Ovary (tissue), 10 donors: ENCODE measurements at regions of chr16 and their contacts with region 1.

Region 1: DNA sequence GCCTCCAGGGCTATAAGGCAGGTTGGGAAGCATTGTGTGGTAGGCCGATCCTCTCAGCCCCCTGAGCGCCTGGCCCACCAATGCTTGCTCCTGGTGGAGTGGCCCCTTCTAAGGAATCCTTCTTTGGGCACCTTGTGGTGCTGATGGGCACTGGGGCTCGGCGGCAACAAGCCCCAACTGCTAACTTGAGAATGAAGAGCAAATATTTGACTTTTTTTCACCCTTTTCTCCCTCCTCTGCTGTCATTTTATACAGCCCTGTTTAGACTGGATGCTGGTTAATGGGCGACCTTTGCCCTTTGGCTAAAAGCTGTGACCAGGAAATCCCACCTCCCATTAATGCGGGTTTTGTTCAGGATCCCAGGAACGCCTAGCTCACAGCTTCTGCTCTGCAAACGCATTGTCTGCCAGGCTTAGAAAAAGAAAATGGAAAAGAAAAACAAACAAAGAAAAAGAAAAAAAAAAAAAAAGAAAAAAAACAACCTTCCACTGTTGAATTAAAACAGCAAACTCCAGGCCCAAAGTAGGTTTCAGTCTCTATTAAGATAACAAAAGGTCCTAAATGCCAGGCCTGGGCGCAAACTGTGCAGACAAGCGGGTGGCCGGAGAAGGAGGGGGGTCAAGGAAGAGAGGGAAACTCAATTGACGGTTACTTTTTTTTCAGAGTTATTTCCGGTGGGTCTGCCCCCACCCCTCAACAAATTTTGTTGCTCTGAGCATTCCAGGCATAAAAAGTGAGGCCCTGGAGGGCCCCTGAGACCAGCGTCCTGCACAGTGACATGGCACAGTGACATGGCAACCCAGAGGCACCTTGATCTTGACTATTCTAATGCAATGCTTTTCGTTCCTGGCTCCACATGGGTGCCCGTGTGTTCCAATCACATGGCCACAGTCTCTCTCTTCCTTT is 301.4 kb downstream of the MAF start:
- DNase-seq: no peak
- H3K4me3 ChIP-seq: no peak overlapping the region
- H3K27ac ChIP-seq: no peak overlapping the region
- H3K4me1 ChIP-seq: peaks cover 5% of the 10 kb centered on the region
- H3K27me3 ChIP-seq: no peaks in the 10 kb centered on the region
- CTCF ChIP-seq: no peak
- EP300 ChIP-seq: no peak
- POLR2A ChIP-seq: no peak

Region 2: DNA sequence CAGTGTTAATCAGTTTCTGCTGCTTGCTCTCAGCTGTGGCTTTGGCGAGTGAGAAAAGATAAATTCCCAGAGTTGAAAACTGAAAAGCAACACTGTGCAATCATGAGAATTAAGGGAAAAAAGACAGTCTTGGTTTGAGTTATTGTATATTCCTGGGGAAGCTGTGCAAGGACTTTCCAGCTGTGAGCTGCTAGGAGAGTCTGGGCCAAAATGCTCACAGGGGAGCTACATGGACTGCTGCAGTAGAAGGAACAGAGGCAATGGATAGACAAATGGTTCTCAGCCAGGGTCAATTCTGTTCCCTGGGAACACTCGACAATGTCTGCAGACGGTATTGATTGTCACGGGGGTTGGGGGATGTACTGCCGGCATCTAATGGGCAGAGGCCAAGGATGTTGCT is 1762.3 kb before region 1 on chr16:
- intact Hi-C with region 1: loop called in 1 of 4 experiments (anchors 5 kb)
- DNase-seq: no peak
- H3K4me3 ChIP-seq: no peak overlapping the region
- H3K27ac ChIP-seq: no peak overlapping the region
- H3K4me1 ChIP-seq: peaks cover 2% of the 10 kb centered on the region
- H3K27me3 ChIP-seq: no peaks in the 10 kb centered on the region
- CTCF ChIP-seq: no peak
- EP300 ChIP-seq: no peak
- POLR2A ChIP-seq: no peak

Region 3: DNA sequence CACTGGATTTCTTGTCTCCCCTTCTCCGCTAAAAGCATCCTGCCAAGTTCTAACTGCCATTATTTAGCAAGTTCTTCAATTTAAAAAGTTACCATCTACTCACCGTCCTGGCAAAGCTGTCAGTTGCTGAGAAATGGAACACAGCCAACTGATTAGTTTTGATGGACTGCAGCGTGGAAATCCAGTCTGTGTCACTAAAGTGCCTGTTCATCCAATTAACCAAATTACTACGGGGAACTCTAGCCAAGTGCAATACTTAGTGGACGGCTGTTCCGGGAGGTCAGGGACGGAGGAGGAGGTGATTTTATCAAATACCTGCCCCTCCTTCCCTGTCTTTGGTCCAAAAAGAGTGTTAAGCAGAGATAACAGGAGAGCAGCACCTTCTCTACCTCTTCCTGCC is 40.7 kb after region 1 on chr16:
- intact Hi-C with region 1: loop called in 1 of 4 experiments (anchors 1 kb)
- DNase-seq: no peak
- H3K4me3 ChIP-seq: no peak overlapping the region
- H3K27ac ChIP-seq: no peak overlapping the region
- H3K4me1 ChIP-seq: no peaks in the 10 kb centered on the region
- H3K27me3 ChIP-seq: no peaks in the 10 kb centered on the region
- CTCF ChIP-seq: no peak
- EP300 ChIP-seq: no peak
- POLR2A ChIP-seq: no peak